Sigmoid colon (tissue), 7 donors: ENCODE measurements at regions of chr4 and their contacts with region 1.

Region 1: DNA sequence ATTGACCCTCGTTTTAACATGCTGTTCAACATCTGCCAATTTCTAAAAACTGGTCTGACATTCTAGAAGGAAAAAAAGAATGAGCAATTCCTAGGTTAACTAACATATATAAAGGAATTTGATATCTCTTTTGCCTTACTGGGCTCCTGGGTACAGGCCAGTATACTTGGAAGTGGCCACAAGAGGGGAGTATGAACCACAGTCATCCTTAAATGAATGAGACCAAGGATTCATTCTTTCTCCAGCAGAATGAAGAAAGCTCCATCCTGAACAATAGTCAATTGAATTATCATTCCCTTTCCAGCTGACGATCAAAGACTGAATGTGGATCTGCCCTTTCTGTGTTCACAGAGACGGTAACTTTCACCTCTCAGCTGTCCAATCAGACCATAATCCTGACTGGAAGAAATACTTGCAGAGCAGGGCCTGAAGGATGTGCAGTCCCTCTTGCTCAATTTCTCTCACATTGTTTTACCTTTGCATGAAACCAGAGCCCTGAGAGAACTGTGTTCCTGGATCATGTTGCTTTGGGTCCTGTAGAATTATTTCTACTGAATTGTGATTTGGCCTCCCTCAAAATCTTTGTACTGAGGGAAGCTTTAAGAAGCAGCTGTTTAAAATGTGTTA is 14.8 kb upstream of the SPARCL1 start:
- DNase-seq: no peak
- H3K4me3 ChIP-seq: no peak overlapping the region
- H3K27ac ChIP-seq: peak overlapping the region in 2 of 4 donors; percentile 22 to 92
- H3K4me1 ChIP-seq: peaks cover 0 to 28% (median 24%) of the 10 kb centered on the region in 4 donors
- H3K27me3 ChIP-seq: no peaks in the 10 kb centered on the region
- CTCF ChIP-seq: peak; percentile 33 to 66 (median 48)
- EP300 ChIP-seq: no peak
- POLR2A ChIP-seq: no peak

Region 2: DNA sequence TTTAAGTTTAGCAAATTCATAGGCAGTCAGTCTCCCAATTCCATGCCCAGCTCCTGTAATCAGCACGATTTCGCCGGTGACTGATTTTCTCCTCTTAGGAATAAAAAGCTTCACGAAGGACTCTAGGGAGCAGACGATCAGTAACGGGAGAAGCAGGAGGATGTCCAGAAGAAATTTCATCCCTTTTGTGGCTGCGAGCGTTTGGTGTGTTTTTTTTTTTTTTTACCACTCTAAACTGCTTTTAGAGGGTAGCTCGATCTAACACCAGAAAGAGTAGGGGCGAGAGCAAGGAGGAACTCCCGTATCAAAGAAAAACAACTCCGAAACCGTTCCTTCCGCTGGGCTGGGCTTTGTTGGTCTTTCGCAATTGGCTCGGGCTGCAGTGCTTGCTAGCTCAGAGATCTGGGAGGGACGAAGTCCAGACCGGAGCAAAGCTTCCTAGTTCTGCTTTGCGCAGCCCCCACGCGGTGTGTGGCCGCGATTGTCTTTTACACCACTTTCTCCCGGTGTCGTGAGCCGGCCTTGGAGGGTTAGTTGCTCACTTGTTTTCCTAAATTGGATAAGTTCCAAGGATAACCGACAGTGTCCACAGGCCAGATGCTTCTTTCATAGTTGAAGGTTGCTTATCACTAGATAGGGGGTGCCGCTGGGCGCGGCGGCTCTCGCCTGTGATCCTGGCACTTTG is 152.9 kb before region 1 on chr4 and contains the start of gene HSD17B11:
- intact Hi-C with region 1: loop called (anchors 5 kb)
- DNase-seq: peak; percentile 97
- H3K4me3 ChIP-seq: peak within 1 kb of the TSS; percentile 41 to 73 (median 56)
- H3K27ac ChIP-seq: peak within 1 kb of the TSS; percentile 83 to 92 (median 89)
- H3K4me1 ChIP-seq: peaks cover 0 to 48% (median 25%) of the 10 kb centered on the region in 4 donors
- H3K27me3 ChIP-seq: no peaks in the 10 kb centered on the region
- CTCF ChIP-seq: peak in 1 of 4 experiments; percentile 24
- EP300 ChIP-seq: no peak
- POLR2A ChIP-seq: peak; percentile 69 to 90
- total RNA-seq, gene HSD17B11: 57.3 to 97.6 (median 70.3) TPM

Region 3: DNA sequence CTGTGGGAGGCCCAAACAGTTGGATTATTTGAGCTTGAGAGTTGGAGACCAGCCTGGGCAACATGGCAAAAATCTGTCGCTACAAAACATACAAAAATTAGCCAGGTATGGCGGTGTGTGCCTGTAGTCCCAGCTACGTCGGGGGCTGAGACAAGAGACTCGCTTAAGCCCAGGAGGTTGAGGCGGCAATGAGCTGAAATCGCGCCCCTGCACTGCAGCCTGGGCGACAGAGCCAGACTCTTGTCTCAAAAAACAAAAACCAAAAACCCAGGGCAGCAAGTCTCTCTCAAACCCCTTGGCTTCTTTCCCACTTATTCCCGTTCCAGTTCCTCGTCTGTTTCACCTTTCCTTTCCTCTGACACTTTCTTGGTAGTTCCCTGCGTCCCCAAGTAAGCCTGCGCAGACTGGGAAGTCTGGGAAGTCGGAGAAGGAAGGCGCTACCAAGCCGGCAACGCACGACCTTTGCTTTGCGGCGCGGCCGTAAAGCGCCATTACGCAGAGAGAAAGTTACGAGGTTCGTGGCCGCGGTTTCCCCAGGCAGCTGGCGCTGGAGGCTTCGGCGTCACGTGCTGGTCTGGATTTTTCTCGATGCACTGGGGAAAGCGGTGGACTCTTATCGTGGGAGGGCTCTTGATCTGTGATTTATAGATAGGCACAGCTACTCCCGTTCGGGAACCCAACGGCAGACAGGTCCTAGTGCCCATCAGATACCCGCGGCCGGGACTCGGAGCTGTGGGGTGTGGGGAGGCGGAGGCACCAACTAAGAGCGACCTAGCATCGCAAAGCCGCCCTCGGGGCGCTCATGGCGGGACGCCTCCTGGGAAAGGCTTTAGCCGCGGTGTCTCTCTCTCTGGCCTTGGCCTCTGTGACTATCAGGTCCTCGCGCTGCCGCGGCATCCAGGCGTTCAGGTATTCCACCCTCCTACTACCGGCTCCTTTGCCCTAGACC is 121.6 kb before region 1 on chr4 and contains the start of gene NUDT9:
- intact Hi-C with region 1: loop called (anchors 5 kb)
- DNase-seq: peak; percentile 97
- H3K4me3 ChIP-seq: peak within 1 kb of the TSS; percentile 67 to 91 (median 74)
- H3K27ac ChIP-seq: peak within 1 kb of the TSS; percentile 85 to 95 (median 91)
- H3K4me1 ChIP-seq: peaks cover 0 to 31% (median 27%) of the 10 kb centered on the region in 4 donors
- H3K27me3 ChIP-seq: no peaks in the 10 kb centered on the region
- CTCF ChIP-seq: no peak
- EP300 ChIP-seq: peak in 1 of 4 donors; percentile 82
- POLR2A ChIP-seq: peak; percentile 83 to 86
- total RNA-seq, gene NUDT9: 12.4 to 25.2 (median 22.7) TPM

Region 4: GRCh38 chr4:87838890-87839591 is 295.1 kb after region 1 on chr4:
- intact Hi-C with region 1: loop called (anchors 1 kb)
- DNase-seq: peak; percentile 69
- H3K4me3 ChIP-seq: no peak overlapping the region
- H3K27ac ChIP-seq: peak overlapping the region in 1 of 4 donors; percentile 13
- H3K4me1 ChIP-seq: peaks cover 0 to 12% (median 5%) of the 10 kb centered on the region in 4 donors
- H3K27me3 ChIP-seq: no peaks in the 10 kb centered on the region
- CTCF ChIP-seq: peak in 3 of 4 experiments; percentile 54 to 76 (median 61)
- EP300 ChIP-seq: no peak
- POLR2A ChIP-seq: no peak

Region 5: GRCh38 chr4:88012647-88013046 is 468.7 kb after region 1 on chr4:
- intact Hi-C with region 1: loop called (anchors 5 kb)
- DNase-seq: no peak
- H3K4me3 ChIP-seq: no peak overlapping the region
- H3K27ac ChIP-seq: peak overlapping the region in 3 of 4 donors; percentile 94 to 97 (median 95)
- H3K4me1 ChIP-seq: peaks cover 0 to 89% (median 83%) of the 10 kb centered on the region in 4 donors
- H3K27me3 ChIP-seq: no peaks in the 10 kb centered on the region
- CTCF ChIP-seq: no peak
- EP300 ChIP-seq: no peak
- POLR2A ChIP-seq: no peak